ENCODE measurements at regions of chr9 and their contacts with region 1.

Region 1: DNA sequence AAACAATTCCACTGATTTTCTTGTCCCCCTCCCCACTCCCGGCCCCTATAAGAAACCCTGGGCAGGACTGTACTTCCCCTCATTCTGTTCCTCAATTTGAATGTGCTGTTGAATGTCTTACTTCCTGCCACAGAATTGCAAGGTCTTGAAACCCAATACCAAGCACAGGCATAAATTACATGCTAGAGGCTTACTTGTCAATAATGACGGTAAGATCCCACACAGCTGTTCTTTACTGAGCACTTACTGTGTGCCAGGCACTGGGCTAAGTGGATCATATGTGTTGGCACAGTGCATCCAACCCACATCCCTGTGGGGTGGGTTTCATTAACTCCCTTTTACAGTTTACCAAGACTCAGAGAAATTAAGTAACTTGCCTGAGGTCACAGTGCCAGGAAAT is 63.4 kb downstream of the MVB12B start:
- DNase-seq: no peak
- ATAC-seq: peak; percentile 17 to 28
- H3K4me3 ChIP-seq: no peak overlapping the region
- H3K27ac ChIP-seq: no peak overlapping the region
- H3K4me1 ChIP-seq: peaks cover 7% of the 10 kb centered on the region
- H3K27me3 ChIP-seq: no peaks in the 10 kb centered on the region

Region 2: DNA sequence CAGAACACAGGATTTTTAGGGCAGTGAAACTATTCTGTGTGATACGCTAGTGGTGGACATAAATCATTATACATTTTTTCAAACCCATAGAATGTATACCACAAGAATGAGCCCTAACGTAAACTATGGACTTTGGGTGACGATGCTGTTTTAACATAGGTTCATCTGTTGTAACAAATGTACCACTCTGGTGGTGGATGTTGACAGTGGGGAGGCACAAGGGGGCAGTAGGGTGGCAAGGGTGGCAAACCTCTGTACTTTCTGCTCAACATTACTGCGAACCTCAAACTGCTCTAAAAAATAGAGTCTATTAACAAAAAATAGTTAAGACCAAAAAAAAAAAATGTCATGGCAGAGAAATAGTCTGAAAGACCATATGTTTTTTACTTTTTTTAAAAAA is 72.5 kb before region 1 on chr9:
- intact Hi-C with region 1: loop called in 1 of 4 experiments (anchors 5 kb)
- DNase-seq: no peak
- ATAC-seq: peak in 1 of 2 donors; percentile 52
- H3K4me3 ChIP-seq: no peak overlapping the region
- H3K27ac ChIP-seq: no peak overlapping the region
- H3K4me1 ChIP-seq: no peaks in the 10 kb centered on the region
- H3K27me3 ChIP-seq: no peaks in the 10 kb centered on the region

Region 3: DNA sequence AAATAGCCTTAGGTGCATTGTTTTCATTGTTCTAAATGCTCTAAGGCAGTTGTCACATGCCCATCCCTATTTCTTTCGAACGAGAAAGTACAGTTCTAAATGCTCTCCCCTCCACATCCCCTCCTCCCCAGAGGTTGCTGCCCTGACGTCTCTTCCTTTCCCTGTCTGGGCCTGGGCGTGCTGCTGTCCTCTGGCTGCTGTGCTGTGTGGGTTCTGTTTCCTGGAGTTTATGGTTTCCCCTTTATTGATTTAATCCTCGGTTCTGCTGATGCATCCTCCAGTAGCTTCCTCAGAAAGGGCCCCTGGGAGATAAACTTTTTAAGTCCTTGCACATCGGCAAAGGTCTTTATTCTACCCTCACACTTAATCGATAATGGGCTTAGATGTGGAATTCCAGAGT is 14.6 kb before region 1 on chr9:
- intact Hi-C with region 1: no loop called
- DNase-seq: peak in 2 of 3 donors; percentile 72
- ATAC-seq: peak; percentile 69 to 77
- H3K4me3 ChIP-seq: no peak overlapping the region
- H3K27ac ChIP-seq: no peak overlapping the region
- H3K4me1 ChIP-seq: peaks cover 6% of the 10 kb centered on the region
- H3K27me3 ChIP-seq: no peaks in the 10 kb centered on the region

Measured in right cardiac atrium (tissue), 5 donors.